ENCODE measurements at regions of chr1 and their contacts with region 1.

Region 1: DNA sequence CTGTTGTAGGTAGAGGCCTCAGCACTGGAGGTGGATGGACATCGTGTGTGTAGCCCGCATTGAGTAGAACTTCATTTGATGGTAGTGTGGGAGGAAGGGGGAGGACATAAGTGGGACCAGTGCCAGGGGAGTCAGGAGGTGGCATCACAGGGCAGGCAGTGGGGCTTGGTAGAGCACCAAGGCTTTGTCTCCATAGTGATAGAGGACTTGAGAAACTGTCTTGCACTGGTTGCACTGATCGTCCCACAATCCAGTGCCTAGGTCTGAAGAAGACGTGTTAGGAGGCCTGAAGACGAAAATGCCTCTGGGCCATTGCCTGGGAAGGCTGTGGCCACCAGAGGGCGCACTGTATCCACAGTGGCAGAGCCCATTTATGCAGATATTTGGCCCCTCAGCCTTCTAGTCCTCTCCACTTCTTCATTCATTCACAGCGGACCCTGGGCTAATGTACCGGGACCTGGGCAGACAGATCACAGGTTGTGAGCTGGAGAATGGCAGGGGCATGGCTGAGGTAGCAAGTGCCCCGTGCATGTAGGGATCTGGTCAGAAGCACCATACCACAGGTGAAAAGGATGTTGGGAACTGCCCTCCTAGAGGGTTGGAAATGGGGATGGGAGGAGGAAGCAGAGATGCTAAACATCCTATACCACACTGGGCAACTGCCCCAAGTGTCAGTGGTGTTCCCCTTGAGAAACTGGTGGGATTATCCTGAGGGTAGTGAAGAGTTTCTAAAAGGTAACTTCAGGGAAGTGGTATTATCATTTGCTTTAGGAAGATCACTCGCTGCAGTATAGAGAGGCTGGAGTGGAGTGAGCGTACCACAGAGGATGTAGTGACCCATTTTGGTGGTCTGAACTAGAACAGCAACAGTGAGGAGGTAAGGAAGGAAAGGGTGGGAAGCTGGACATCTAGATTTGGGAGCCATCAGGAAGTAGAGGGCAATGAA is 95.3 kb downstream of the PIK3R3 start:
- DNase-seq: peak; percentile 67 to 86 (median 77)
- H3K4me3 ChIP-seq: no peak overlapping the region
- H3K4me3 Mint-ChIP-seq: no peak overlapping the region
- H3K27ac ChIP-seq: no peak overlapping the region
- H3K27ac Mint-ChIP-seq: no peak overlapping the region
- H3K4me1 ChIP-seq: peaks cover 6% of the 10 kb centered on the region
- H3K4me1 Mint-ChIP-seq: no peaks in the 10 kb centered on the region
- H3K27me3 ChIP-seq: no peaks in the 10 kb centered on the region
- H3K27me3 Mint-ChIP-seq: no peaks in the 10 kb centered on the region

Region 2: DNA sequence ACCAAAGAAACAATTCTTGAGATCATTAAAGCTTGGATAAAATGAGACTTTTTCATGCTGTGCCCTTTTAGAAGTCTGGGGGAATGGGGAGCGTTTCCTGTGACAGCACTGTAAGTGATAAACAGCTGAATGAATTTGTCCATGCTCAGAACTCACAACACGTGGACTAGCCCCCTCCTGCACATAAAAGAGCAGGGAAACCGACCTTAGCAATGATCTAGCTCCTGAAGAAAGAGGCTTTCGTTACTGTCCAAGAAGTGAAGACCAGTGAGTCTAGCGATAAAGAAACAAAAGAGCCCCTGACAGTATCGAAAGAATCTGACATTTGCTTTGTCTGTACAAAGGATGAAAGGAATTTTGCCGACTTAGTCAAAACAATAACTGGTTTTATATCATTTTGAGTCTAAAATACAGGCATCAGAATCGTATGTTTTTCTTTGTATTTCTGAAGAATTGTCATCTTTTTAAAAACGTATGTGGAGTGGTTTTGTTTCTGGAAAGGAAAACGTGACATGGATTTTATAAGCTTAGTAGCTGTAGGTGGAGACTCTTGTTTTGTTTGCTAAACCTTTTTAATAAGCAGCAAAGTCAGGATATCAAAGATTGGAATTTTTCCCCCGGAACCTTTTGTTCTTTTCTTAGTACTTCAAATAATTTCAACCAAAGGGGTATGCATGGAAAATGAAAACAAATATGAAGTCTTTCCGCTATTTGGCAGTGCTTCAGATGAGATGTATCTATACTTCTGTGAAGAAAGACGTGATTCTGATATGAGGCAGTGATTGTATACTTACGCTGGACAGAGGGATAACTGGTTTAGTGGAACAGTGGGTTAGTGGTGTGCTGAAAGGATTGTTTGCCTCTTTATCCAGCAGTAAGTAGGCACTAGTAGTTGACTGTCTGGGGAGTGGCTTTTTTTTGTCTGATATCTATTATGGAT is 172.7 kb before region 1 on chr1:
- CTCF ChIA-PET with region 1: no interaction called
- POLR2A ChIA-PET with region 1: no interaction called
- DNase-seq: no peak
- H3K4me3 ChIP-seq: no peak overlapping the region
- H3K4me3 Mint-ChIP-seq: no peak overlapping the region
- H3K27ac ChIP-seq: no peak overlapping the region
- H3K27ac Mint-ChIP-seq: no peak overlapping the region
- H3K4me1 ChIP-seq: no peaks in the 10 kb centered on the region
- H3K4me1 Mint-ChIP-seq: peaks cover 0 to 10% (median 0%) of the 10 kb centered on the region in 3 donors
- H3K27me3 ChIP-seq: no peaks in the 10 kb centered on the region
- H3K27me3 Mint-ChIP-seq: no peaks in the 10 kb centered on the region

Region 3: GRCh38 chr1:46008585-46008984 is 28.6 kb before region 1 on chr1:
- CTCF ChIA-PET with region 1: no interaction called
- POLR2A ChIA-PET with region 1: no interaction called
- DNase-seq: no peak
- H3K4me3 ChIP-seq: no peak overlapping the region
- H3K4me3 Mint-ChIP-seq: no peak overlapping the region
- H3K27ac ChIP-seq: no peak overlapping the region
- H3K27ac Mint-ChIP-seq: peak overlapping the region in 1 of 8 donors; percentile 23
- H3K4me1 ChIP-seq: no peaks in the 10 kb centered on the region
- H3K4me1 Mint-ChIP-seq: no peaks in the 10 kb centered on the region
- H3K27me3 ChIP-seq: no peaks in the 10 kb centered on the region
- H3K27me3 Mint-ChIP-seq: no peaks in the 10 kb centered on the region

Region 4: DNA sequence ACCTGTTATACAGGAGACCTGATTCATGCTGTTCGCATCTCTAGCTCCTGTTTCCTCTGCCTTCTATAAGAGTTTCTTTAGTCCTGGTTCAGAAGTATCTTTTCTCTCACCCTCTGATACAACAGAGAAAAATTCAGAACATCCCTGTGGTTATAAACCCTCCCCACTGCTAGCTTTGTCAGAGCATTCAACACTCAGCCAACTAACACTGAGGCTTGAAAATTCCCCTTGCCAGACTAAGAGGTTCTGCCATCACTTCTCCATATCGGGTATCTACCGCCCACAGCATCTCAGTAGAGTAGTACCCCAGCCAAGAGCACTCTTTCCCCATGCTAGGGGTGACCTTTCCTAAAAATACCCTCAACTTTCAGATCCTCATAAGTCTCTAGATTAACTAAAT is 114.8 kb after region 1 on chr1:
- CTCF ChIA-PET with region 1: no interaction called
- POLR2A ChIA-PET with region 1: no interaction called
- DNase-seq: no peak
- H3K4me3 ChIP-seq: no peak overlapping the region
- H3K4me3 Mint-ChIP-seq: no peak overlapping the region
- H3K27ac ChIP-seq: no peak overlapping the region
- H3K27ac Mint-ChIP-seq: no peak overlapping the region
- H3K4me1 ChIP-seq: no peaks in the 10 kb centered on the region
- H3K4me1 Mint-ChIP-seq: no peaks in the 10 kb centered on the region
- H3K27me3 ChIP-seq: no peaks in the 10 kb centered on the region
- H3K27me3 Mint-ChIP-seq: no peaks in the 10 kb centered on the region

Region 5: DNA sequence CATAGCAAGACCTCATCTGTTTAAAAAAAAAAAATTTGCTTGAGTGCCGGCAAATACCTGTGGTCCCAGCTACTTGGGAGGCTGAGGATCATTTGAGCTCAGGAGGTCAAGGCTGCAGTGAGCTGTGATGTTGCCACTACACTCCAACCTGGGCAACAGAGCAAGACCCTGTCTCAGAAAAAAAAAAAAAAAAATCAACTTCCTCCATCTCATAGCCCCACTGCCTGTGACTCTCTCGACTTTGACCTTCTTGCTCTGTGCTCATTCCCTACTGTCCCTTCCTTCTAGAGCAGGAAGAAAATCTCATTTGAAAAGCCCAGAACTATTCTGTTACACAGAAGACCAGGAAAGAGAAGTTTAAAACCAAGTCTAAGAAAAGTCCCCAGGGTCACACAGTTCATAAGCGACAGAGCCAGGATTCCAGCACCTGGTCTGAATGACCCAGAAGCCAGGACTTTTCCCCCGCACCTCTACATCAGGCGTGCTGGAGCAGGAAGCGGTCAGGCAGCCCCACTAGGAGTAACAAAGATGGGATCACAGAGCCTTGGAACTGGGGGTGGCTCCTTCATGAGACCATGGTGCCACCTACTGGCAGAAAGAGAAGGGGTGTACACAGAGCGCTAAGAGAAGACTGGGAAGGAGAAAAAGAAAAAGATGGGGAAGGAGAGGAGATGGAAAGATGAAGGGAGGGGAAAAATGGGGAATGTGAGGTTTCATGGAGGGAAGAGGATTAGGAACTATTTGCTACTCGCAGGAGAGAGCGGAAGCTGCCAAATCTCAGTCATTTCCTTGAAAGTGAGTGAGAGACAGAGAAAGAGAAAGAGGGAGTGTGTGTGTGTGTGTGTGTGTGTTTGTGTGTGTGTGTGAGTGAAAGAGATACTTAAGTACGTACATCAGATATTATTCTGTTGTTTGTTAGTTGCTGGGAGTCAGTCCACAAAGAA is 142.2 kb after region 1 on chr1:
- CTCF ChIA-PET with region 1: interaction called, 69 read pairs
- POLR2A ChIA-PET with region 1: no interaction called
- DNase-seq: peak; percentile 42 to 76 (median 53)
- H3K4me3 ChIP-seq: no peak overlapping the region
- H3K4me3 Mint-ChIP-seq: no peak overlapping the region
- H3K27ac ChIP-seq: no peak overlapping the region
- H3K27ac Mint-ChIP-seq: no peak overlapping the region
- H3K4me1 ChIP-seq: peaks cover 2% of the 10 kb centered on the region
- H3K4me1 Mint-ChIP-seq: peaks cover 5 to 6% (median 5%) of the 10 kb centered on the region in 3 donors
- H3K27me3 ChIP-seq: no peaks in the 10 kb centered on the region
- H3K27me3 Mint-ChIP-seq: no peaks in the 10 kb centered on the region

Measured in CD8-positive, alpha-beta memory T cell (primary cell).